T-cell (primary cell): ENCODE measurements at regions of chr7 and their contacts with region 1.

Region 1: DNA sequence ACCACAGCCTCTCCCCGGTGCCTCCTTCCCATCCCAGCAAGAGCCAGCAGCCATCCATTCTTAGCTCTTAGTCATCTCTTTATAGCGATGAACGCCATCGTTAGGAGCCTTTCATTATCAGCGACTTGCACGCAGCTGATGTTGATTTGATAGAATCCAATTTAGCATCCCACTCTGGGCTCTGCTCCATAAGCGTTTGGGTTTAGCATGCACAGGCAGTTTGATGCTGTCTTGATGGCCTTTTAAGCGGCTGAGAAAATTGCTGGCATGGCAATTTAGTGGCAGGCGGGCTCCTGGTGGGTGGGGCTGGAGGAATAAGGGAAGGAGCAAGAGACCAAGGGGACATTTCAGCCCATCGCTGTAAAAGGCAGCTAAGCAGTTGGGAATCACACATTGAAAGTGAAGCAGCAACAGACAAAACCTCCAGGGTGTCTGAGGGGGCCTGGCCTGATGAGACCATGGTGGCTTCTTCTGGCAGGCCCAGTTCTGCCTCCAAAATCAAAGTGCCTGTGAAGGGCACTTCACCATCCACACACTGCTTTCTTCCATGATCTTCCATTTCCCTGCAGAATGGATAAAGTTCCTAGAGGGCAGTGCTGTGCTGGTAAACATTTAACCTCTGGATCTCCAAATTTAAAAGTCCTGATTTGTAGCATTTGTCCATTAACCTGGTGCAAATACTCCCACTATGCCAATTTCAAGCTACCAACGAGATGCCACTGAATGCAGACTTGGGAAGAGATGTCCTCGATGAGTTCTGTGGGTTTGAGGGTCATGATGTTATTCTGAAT is 107.8 kb upstream of the PLXNA4 start:
- DNase-seq: no peak
- ATAC-seq: no peak
- H3K4me3 ChIP-seq: no peak overlapping the region
- H3K4me3 Mint-ChIP-seq: no peak overlapping the region
- H3K27ac ChIP-seq: no peak overlapping the region
- H3K27ac Mint-ChIP-seq: no peak overlapping the region
- H3K4me1 ChIP-seq: no peaks in the 10 kb centered on the region
- H3K4me1 Mint-ChIP-seq: no peaks in the 10 kb centered on the region
- H3K27me3 ChIP-seq: peaks cover 0 to 6% of the 10 kb centered on the region in 2 experiments
- H3K27me3 Mint-ChIP-seq: peaks cover 4 to 7% of the 10 kb centered on the region in 2 donors

Region 2: GRCh38 chr7:132614428-132615318 is 69.4 kb before region 1 on chr7:
- CTCF ChIA-PET with region 1: interaction called in 1 of 2 experiments, 10 read pairs
- POLR2A ChIA-PET with region 1: no interaction called
- DNase-seq: peak in 1 of 35 experiments; percentile 1
- ATAC-seq: no peak
- H3K4me3 ChIP-seq: peak overlapping the region in 1 of 2 donors; percentile 52
- H3K4me3 Mint-ChIP-seq: peak overlapping the region; percentile 11 to 66 (median 19)
- H3K27ac ChIP-seq: no peak overlapping the region
- H3K27ac Mint-ChIP-seq: no peak overlapping the region
- H3K4me1 ChIP-seq: peaks cover 0 to 7% of the 10 kb centered on the region in 2 experiments
- H3K4me1 Mint-ChIP-seq: peaks cover 10 to 11% (median 10%) of the 10 kb centered on the region in 3 donors
- H3K27me3 ChIP-seq: peaks cover 0 to 19% of the 10 kb centered on the region in 2 experiments
- H3K27me3 Mint-ChIP-seq: peaks cover 13 to 16% of the 10 kb centered on the region in 2 donors

Region 3: GRCh38 chr7:132697003-132697402 is 12.9 kb after region 1 on chr7:
- CTCF ChIA-PET with region 1: no interaction called
- POLR2A ChIA-PET with region 1: no interaction called
- DNase-seq: no peak
- ATAC-seq: no peak
- H3K4me3 ChIP-seq: no peak overlapping the region
- H3K4me3 Mint-ChIP-seq: no peak overlapping the region
- H3K27ac ChIP-seq: no peak overlapping the region
- H3K27ac Mint-ChIP-seq: no peak overlapping the region
- H3K4me1 ChIP-seq: no peaks in the 10 kb centered on the region
- H3K4me1 Mint-ChIP-seq: peaks cover 0 to 10% (median 0%) of the 10 kb centered on the region in 3 donors
- H3K27me3 ChIP-seq: peaks cover 0 to 6% of the 10 kb centered on the region in 2 experiments
- H3K27me3 Mint-ChIP-seq: no peaks in the 10 kb centered on the region